Astrocyte of the cerebellum (primary cell): ENCODE measurements at regions of chr16 and their contacts with region 1.

Region 1: DNA sequence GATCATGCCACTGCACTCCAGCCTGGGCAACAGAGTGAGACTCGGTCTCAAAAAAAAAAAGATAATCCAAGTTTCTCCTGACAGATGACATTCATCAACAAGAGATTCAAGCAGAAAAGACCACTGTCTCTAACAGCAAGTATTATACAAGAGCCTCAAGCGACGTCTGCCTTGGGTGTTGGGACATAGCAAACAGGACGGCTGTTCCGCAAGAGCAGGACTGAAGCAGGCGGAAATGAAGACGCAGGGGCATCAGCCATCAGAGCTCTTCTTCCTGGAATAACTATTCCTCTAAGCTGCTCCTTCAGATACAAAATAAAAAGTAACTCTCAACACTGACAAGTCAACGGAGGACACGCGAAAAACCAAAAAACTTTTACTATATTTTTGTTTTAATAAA is 54.0 kb downstream of the ANKRD11 start:
- DNase-seq: no peak
- H3K4me3 ChIP-seq: no peak overlapping the region
- CTCF ChIP-seq: no peak

Region 2: GRCh38 chr16:89171463-89172170 is 264.7 kb before region 1 on chr16 and contains the start of gene CDH15:
- in situ Hi-C with region 1: no loop called
- DNase-seq: peak; percentile 47
- H3K4me3 ChIP-seq: peak within 1 kb of the TSS; percentile 21
- CTCF ChIP-seq: no peak

Region 3: DNA sequence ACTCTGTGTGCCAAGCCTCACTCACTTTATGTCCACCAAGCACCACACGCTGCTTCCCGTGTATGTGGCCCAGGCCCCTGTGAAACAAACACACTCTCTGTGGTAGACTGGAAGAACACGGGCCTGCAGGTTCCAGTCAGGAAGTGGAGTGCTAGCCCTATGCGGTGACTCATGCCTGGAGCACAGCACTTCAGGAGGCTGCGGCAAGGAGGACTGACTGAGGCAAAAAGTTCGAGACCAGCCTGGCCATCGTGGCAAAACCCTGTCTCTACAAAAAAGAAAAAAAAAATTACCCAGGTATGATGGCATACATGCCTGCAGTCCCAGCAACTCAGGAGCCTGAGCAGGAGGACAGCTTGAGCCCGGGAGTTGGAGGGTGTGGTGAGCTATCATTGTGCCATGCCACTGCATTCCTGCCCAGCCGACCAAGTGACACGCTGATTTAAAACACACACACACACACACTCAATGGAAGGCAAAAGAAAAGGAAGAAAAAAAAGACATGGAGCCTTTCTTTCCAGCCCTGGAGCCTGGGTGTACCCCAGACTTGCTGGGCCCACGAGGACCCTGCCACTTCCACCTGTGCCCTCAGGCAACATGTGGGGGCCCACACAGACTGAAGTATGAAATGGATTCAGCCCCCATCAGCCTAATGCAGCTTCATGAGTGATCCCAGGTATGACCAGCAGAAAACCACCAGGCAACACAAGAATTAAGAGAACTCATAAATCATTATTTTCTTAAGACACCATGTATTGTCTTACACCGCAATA is 72.6 kb before region 1 on chr16:
- in situ Hi-C with region 1: loop called (anchors 5 kb)
- DNase-seq: peak; percentile 59
- H3K4me3 ChIP-seq: no peak overlapping the region
- CTCF ChIP-seq: no peak

Region 4: DNA sequence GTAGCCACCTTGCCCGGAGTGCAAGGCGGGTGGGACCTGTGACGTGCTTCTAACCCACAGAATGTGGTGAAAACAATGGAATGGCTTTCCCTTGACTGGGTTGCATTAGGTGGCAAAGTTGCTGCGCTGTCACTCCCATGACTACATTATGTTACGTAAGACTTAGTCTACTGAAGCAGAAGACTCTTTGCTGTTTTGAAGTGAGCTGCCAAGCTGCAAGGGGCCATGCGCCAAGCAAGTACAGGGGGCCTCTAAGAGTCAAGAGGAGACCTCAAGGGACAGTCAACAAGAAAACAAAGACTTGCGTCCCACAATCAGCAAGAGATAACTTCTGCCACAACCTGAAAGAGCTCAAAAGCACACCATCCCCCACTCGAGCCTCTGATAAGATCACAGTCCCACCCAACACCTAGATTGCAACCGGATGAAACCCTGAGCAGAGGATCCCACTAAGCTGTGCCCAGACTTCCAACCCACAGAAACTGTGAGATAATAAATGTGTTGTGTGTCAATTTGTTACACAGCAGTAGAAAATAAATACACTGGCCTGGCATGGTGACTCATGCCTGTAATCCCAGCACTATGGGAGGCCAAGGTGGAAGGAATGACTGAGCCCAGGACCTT is 37.5 kb after region 1 on chr16:
- in situ Hi-C with region 1: loop called (anchors 5 kb)
- DNase-seq: peak; percentile 43
- H3K4me3 ChIP-seq: no peak overlapping the region
- CTCF ChIP-seq: no peak